Activated naive CD4-positive, alpha-beta T cell treated with anti-CD3 and anti-CD28 coated beads, Interleukin-2, amount 10 ng/mL, durations not matched to agents 7 days and 5 days (primary cell): ENCODE measurements at regions of chr11 and their contacts with region 1.

Region 1: GRCh38 chr11:125141686-125142535 is 22.6 kb upstream of the PKNOX2 start:
- DNase-seq: peak; percentile 65
- H3K4me3 Mint-ChIP-seq: no peak overlapping the region
- H3K27ac Mint-ChIP-seq: no peak overlapping the region
- H3K4me1 Mint-ChIP-seq: peaks cover 2% of the 10 kb centered on the region
- H3K27me3 Mint-ChIP-seq: peaks cover 43% of the 10 kb centered on the region

Region 2: DNA sequence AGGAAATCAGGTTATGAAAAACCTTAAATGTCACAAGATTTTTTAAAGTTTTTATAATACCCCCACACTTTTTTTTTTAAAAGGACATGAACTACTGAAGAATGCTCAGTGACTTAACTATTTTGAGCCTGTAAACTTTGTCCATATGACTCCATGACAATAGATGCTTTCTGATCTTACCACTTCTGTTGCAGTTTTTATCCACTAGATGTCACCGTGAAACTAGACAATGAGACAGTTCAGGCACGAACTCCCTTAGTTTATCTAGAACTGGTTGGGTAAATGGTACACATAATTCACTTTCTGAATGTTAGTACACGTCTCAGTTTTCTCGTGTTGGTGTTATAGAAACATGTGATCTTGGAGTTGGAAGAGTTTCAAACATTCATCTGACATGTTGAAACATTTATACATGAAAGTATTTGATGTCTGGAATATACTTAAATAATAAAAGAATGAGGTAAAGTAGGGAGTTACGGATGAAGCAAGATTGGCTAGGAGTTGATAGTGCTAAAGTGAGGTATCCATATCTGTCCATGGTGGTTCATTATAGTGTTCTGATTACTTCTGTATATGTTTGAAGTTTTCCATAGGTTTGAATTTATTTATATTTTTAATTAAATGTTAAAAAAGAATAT is 179.8 kb before region 1 on chr11:
- CTCF ChIA-PET with region 1: interaction called, 24 read pairs
- DNase-seq: no peak
- H3K4me3 Mint-ChIP-seq: no peak overlapping the region
- H3K27ac Mint-ChIP-seq: no peak overlapping the region
- H3K4me1 Mint-ChIP-seq: peaks cover 6% of the 10 kb centered on the region
- H3K27me3 Mint-ChIP-seq: no peaks in the 10 kb centered on the region

Region 3: GRCh38 chr11:125091247-125091876 is 50.5 kb before region 1 on chr11:
- CTCF ChIA-PET with region 1: interaction called, 51 read pairs
- DNase-seq: no peak
- H3K4me3 Mint-ChIP-seq: no peak overlapping the region
- H3K27ac Mint-ChIP-seq: no peak overlapping the region
- H3K4me1 Mint-ChIP-seq: peaks cover 5% of the 10 kb centered on the region
- H3K27me3 Mint-ChIP-seq: no peaks in the 10 kb centered on the region

Region 4: DNA sequence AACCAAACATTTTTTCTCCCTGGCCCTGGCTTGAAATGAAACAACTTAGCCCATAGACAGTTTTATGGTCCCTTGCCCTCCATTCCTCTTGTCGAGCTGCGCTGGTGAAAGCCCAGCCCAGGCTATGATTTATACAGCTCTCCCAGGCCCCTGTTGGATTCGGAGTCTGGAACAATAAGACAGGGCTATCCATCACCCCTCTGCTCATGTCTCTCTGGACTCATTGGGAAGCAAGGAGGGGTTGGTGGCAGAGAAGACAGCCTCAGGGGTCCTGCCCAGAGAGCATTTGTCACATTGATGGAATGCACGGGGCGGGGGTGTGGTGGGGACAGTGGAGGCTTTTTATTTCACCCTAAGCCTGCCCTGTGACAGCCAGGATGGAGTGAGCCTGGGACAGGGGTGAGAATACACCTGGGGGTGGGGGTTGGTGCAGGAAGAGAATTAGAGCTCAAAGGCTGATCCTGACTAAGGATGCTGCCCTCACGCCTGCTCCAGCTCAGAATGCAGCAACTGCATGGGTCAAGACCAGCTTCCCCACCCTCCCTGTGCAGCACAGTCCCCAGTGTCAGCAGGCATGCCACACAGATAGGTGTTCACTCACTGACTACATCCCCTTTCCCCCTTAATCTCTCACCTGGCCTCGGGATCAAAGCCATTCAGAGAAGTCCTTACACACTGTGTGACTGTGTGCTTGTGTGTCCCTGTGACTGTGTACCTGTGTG is 12.6 kb after region 1 on chr11:
- CTCF ChIA-PET with region 1: interaction called, 11 read pairs
- DNase-seq: no peak
- H3K4me3 Mint-ChIP-seq: no peak overlapping the region
- H3K27ac Mint-ChIP-seq: no peak overlapping the region
- H3K4me1 Mint-ChIP-seq: no peaks in the 10 kb centered on the region
- H3K27me3 Mint-ChIP-seq: peaks cover 32% of the 10 kb centered on the region